Vagina (tissue), 2 donors: ENCODE measurements at regions of chr3 and their contacts with region 1.

Region 1: DNA sequence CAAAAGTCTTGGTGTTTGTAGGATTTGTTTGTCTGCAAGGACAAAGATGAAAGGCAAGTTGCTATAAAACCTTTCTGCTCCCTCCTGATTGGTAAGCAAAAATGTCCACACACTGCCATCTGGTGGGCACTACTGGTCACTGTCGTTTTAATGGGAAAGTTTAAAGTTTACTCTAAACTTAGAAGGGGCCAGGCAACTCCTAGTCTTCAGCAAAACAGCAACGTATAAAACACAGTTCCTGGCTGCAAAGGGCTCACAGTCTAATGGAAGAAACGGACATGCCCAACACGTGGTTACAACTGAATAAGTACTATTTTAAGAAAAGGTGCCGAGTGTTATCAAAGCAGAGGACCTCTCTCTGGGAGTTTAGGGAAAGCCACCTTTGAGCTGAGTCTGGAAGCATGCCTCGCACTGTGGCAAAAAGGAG is 23.7 kb upstream of the TPRG1 start:
- DNase-seq: no peak
- H3K4me3 ChIP-seq: no peak overlapping the region
- H3K27ac ChIP-seq: peak overlapping the region; percentile 72
- H3K4me1 ChIP-seq: peaks cover 14% of the 10 kb centered on the region
- H3K27me3 ChIP-seq: no peaks in the 10 kb centered on the region
- CTCF ChIP-seq: peak; percentile 25 to 89 (median 57)
- POLR2A ChIP-seq: no peak

Region 2: DNA sequence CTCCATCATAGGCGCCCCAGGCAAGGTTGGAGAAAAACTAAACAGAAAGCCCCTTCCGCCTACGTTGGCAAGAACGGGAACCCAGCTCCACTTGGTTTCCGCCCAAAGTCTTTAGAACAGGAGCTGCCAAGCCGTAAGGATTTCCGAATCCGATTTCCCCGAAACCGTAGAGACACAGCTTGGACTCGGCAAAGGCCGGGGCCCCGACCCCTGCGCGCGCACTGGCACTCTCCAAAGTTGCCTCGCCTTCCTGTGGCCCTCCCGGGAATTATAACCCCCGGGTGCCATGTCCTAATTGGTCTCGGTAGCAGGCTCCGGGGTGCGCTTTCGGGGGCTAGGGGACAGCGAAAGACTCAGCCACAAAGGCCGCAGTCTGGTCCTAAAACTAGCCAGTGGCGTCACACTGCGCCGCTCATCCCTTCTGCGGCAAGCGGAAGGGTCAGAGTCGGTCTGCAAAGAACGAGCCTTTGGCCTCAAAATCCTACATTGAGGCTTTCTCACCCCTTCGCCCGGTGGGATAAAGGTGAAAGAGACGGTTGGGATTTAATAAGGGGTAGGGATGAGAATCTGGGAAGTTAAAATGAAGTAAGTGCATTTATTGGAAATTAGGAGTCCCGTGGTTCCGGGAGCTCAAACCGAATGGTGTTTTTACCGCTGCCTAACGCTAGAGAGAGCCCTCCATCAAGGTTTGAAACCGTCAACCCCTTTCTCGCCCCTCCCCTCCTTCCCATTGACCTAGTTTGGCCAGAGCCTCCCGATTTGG is 1409.6 kb before region 1 on chr3:
- intact Hi-C with region 1: loop called (anchors 10 kb)
- DNase-seq: peak in 1 of 2 donors; percentile 97
- H3K4me3 ChIP-seq: peak overlapping the region; percentile 52 to 77
- H3K27ac ChIP-seq: peak overlapping the region; percentile 99
- H3K4me1 ChIP-seq: peaks cover 44% of the 10 kb centered on the region
- H3K27me3 ChIP-seq: no peaks in the 10 kb centered on the region
- CTCF ChIP-seq: peak; percentile 33 to 68 (median 58)
- POLR2A ChIP-seq: no peak

Region 3: DNA sequence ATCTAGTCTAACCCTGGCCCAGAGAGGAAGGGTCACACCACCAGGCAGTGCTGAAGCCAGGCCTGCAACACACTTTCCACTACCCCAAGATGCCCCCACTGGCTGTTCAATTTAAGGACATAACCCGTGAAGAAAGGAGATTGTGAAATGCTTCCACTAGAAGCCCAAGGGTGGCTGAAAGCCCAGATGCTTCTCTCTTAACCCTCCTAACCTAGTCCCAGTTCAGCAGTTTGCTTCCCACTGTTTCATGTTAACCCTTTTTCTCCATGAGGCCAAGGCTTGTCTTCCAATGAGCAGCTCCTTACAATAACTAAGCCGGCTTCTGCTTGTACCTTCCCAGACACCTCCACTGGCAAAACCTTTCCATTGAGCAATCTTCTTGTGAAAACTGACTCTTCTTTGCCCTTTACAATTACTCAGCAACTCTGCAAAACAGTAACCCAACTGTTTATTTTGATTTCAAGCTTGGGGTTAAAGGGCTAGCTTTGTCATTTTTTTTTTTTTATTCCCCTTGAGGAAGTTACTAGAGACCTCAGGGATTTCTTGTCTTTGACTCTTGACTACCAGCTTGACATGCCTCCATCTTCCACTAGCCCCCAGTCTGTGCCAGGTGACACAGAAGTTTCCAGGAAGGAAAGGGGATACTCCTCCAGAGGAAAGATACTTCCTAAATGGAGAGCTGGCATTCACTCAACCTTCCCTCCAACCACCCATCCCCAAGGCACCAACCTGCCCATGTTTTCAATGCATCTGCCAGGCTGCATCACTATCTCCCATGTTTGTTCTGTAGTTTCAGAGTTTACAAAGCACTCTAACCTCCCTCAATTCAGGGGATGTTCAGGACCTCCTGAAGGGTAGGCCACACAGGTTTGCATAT is 1192.8 kb before region 1 on chr3:
- intact Hi-C with region 1: loop called (anchors 10 kb)
- DNase-seq: peak in 1 of 2 donors; percentile 92
- H3K4me3 ChIP-seq: no peak overlapping the region
- H3K27ac ChIP-seq: no peak overlapping the region
- H3K4me1 ChIP-seq: no peaks in the 10 kb centered on the region
- H3K27me3 ChIP-seq: no peaks in the 10 kb centered on the region
- CTCF ChIP-seq: no peak
- POLR2A ChIP-seq: no peak

Region 4: DNA sequence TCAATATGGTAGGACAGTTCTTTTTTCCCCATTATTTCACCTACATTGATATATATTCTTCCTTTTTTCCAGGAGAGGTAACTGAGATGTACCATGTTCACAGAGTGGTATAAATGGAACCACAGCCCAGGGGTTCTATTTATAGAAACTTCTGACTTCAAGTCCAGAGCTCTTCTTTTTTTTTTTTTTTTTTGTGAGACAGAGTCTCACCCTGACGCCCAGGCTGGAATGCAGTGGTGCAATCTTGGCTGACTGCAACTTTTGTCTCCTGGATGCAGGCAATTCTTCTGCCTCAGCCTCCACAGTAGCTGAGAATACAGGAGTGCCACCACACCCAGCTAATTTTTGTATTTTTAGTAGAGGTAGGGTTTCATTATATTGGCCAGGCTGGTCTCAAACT is 243.4 kb before region 1 on chr3:
- intact Hi-C with region 1: no loop called
- DNase-seq: no peak
- H3K4me3 ChIP-seq: no peak overlapping the region
- H3K27ac ChIP-seq: no peak overlapping the region
- H3K4me1 ChIP-seq: peaks cover 23% of the 10 kb centered on the region
- H3K27me3 ChIP-seq: no peaks in the 10 kb centered on the region
- CTCF ChIP-seq: no peak
- POLR2A ChIP-seq: no peak

Region 5: GRCh38 chr3:188954590-188955208 is 193.4 kb before region 1 on chr3:
- intact Hi-C with region 1: loop called (anchors 5 kb)
- DNase-seq: no peak
- H3K4me3 ChIP-seq: no peak overlapping the region
- H3K27ac ChIP-seq: peak overlapping the region; percentile 30
- H3K4me1 ChIP-seq: peaks cover 31% of the 10 kb centered on the region
- H3K27me3 ChIP-seq: no peaks in the 10 kb centered on the region
- CTCF ChIP-seq: peak; percentile 67 to 96 (median 95)
- POLR2A ChIP-seq: no peak

Region 6: DNA sequence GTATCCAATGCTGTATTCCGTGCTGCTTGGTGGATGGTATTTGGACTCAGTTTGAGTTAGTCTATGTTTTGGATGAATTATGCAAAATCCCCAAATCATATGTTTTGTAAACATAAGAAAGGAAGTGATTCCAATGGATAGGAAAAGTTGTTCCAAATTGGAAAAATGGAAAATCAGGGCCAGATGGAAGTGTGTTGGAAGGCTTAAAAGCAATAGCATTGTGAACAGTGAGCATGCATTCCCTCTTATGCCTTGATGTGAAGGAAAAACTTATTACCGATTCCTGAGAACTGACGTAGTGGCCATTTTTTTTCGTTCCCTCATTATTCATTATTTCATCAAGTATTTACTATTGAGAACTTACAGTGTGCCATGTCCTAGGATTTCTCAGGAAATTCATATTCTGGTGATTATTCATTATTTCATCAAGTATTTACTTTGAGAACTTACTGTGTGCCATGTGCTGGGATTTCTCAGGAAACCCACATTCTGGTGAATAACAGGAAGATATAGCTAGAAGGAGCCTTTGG is 120.4 kb before region 1 on chr3:
- intact Hi-C with region 1: no loop called
- DNase-seq: no peak
- H3K4me3 ChIP-seq: no peak overlapping the region
- H3K27ac ChIP-seq: no peak overlapping the region
- H3K4me1 ChIP-seq: no peaks in the 10 kb centered on the region
- H3K27me3 ChIP-seq: no peaks in the 10 kb centered on the region
- CTCF ChIP-seq: no peak
- POLR2A ChIP-seq: no peak

Region 7: DNA sequence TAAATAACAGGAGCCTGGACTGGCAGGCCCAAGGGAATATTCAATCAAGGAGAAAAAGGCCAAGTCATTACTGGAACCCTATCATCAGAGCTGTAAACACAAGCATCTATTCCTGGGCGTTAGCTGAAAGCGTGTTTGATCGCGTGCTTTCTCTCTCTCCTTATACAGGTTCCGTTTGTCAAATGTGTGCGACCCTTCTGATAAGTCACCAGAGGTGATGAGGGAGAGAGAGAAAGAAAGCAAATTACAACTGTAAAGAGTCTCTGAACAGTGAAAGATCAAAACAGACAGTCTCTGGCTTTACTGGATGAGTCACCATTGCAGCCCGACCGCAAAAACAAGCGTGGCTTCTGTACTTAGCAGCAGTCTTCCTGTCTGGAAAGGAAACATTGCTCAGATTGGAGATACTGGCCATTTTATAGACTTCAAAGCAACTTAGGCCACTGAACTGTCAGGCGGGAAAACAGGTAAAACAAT is 15.8 kb before region 1 on chr3:
- intact Hi-C with region 1: no loop called
- DNase-seq: no peak
- H3K4me3 ChIP-seq: no peak overlapping the region
- H3K27ac ChIP-seq: peak overlapping the region; percentile 86
- H3K4me1 ChIP-seq: peaks cover 28% of the 10 kb centered on the region
- H3K27me3 ChIP-seq: no peaks in the 10 kb centered on the region
- CTCF ChIP-seq: peak in 1 of 3 experiments; percentile 0
- POLR2A ChIP-seq: no peak